ENCODE measurements at regions of chr22 and their contacts with region 1.

Region 1: GRCh38 chr22:38316364-38317121 is 690 bp downstream of the CSNK1E start:
- DNase-seq: peak; percentile 67 to 97 (median 76)

Region 2: DNA sequence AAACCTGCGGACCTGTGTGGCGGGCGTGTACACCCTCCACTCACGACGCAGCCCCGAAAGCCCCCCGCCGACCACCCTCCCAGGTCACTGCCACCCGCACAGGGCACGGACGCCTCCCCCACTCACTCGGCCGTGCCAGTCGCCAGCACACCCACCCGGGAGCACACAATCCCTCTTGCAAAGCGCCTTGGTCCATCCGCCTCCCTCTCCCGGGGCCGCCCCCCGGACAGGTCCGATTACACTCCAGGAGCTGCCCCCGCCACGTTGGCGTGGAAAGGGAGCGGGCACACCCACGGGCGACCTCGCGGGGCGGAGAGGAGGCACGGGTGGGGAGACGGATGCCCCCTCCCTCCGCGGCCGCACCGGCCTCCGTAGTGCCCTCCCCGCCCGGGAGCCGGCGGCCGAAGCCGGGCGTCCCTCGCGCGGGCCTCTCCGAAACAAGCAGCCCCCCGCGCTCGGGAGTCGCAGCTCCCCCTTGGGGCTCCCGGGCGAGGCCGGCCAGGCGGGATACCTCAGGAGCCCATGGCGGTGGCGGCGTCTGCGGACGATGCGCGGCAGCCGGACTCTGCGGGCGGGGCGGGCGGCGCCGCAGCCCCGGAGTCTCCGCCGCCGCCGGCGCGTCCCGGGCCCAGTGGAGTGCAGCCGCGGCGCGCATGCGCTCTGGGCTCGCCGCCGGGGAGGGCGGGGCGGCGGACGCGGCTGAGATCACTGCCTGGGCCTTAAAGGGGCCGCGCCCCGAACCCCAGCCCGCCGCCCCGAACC is 44.0 kb before region 1 on chr22 and contains the start of gene TMEM184B:
- intact Hi-C with region 1: loop called (anchors 1 kb)
- DNase-seq: peak; percentile 69 to 97 (median 75)

Region 3: DNA sequence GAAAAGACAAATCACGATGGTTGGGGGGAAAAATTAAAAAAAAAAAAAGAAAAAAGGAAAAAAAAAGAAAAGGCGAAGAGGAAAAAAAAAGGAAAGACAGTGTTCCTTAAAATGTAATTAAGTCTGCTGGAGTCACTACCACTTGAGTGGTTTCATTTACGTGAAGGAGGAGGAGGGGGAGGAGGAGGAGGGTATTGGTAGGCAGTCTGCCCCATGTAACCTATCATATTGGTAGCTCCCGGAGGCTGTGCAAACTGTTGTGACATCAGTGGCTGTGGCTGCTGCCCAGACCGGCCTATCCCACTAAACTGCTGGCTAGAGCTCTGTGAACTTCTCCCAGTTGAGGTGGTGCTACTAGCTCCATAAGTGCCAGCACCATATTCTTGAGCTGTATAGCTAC is 169.2 kb after region 1 on chr22:
- intact Hi-C with region 1: no loop called
- DNase-seq: peak in 2 of 10 donors; percentile 18 to 22

Measured in posterior cingulate gyrus (tissue), 11 donors.